Transverse colon (tissue), 4 donors: ENCODE measurements at regions of chr19 and their contacts with region 1.

Region 1: DNA sequence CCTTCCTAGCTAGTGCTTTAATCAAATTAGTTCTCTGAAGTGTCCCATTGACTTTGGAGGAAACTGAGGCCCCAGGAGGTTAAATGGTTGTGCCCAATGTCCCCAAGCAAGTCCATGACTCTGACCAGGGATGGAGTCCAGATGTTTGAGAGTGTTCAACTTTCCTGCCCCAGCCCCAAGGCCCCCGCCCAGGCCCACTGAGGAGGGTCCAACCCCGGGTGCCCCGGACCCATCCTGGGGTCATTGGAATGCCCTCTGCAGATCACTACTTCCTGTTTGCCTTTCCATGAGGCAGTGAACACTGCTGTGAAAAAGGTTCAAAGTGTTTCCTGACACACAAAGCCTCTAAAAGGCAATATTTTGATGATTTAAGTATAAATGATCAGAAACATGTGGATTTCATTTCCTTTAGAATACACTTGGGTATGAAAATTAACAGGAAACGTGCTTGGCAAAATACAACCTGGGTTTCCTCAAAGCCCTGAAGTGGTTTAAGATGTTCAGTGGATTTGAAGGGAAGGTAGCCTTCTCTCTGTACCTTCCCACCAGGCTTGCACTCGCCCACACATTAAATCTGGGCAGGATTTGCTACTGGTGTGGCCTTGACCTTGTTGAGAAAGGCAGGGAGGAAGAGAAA is 335.7 kb downstream of the TSHZ3 start:
- DNase-seq: no peak
- H3K4me3 ChIP-seq: no peak overlapping the region
- H3K27ac ChIP-seq: no peak overlapping the region
- H3K4me1 ChIP-seq: no peaks in the 10 kb centered on the region
- H3K27me3 ChIP-seq: no peaks in the 10 kb centered on the region
- CTCF ChIP-seq: no peak
- EP300 ChIP-seq: no peak
- POLR2A ChIP-seq: no peak

Region 2: DNA sequence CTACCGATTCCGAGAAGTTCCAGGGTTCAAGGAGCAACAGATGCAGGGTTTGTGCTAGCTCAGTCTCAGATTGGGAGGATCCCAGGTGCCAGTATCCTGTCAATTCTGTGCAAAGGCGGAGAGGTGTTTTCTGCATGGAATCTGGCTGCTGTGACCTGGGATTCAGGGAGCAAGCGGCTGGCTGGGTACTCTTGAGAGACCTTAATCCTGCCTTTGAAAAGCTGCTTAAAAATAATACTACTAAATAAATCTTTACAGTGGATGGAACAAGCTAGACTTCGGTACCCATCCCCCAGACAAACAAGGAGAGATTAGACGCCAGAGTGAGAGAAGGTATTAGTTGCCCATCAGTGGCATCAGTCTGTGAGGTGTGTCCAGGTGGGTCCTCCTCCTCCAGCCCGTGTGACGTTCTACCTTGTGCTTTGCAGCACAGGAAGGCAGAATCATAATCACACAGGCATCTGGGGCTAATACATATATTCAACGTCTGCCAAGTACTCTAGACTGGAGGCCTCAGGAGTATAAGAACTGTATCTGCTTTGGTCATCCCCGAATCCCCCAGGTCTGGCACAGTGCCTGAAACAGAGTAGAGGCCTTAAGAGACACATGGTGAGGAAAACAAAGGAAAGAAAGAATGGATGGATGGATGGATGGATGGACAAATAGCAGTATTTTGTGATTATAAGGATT is 410.7 kb before region 1 on chr19:
- in situ Hi-C with region 1: no loop called
- intact Hi-C with region 1: no loop called
- DNase-seq: no peak
- H3K4me3 ChIP-seq: no peak overlapping the region
- H3K27ac ChIP-seq: no peak overlapping the region
- H3K4me1 ChIP-seq: no peaks in the 10 kb centered on the region
- H3K27me3 ChIP-seq: no peaks in the 10 kb centered on the region
- CTCF ChIP-seq: no peak
- EP300 ChIP-seq: no peak
- POLR2A ChIP-seq: no peak

Region 3: GRCh38 chr19:30997222-30997621 is 16.3 kb before region 1 on chr19:
- in situ Hi-C with region 1: no loop called
- intact Hi-C with region 1: loop called (anchors 1 kb)
- DNase-seq: no peak
- H3K4me3 ChIP-seq: no peak overlapping the region
- H3K27ac ChIP-seq: no peak overlapping the region
- H3K4me1 ChIP-seq: no peaks in the 10 kb centered on the region
- H3K27me3 ChIP-seq: peaks cover 7% of the 10 kb centered on the region
- CTCF ChIP-seq: no peak
- EP300 ChIP-seq: no peak
- POLR2A ChIP-seq: no peak